ENCODE measurements at regions of chr1 and their contacts with region 1.

Region 1: GRCh38 chr1:20633190-20634064 is at the start of gene PINK1:
- DNase-seq: peak; percentile 78 to 99 (median 90)
- ATAC-seq: peak; percentile 92
- H3K4me3 ChIP-seq: peak within 1 kb of the TSS; percentile 80
- H3K4me3 Mint-ChIP-seq: peak within 1 kb of the TSS; percentile 78 to 98 (median 94)
- H3K27ac ChIP-seq: peak within 1 kb of the TSS; percentile 86
- H3K27ac Mint-ChIP-seq: peak within 1 kb of the TSS; percentile 69 to 94 (median 88)
- H3K4me1 ChIP-seq: peaks cover 8 to 9% of the 10 kb centered on the region in 2 donors
- H3K4me1 Mint-ChIP-seq: peaks cover 0 to 13% (median 8%) of the 10 kb centered on the region in 7 donors
- H3K27me3 ChIP-seq: no peaks in the 10 kb centered on the region
- H3K27me3 Mint-ChIP-seq: peaks cover 0 to 22% (median 2%) of the 10 kb centered on the region in 5 donors
- total RNA-seq, gene PINK1: 4.3 to 19.7 (median 13.1) TPM

Region 2: DNA sequence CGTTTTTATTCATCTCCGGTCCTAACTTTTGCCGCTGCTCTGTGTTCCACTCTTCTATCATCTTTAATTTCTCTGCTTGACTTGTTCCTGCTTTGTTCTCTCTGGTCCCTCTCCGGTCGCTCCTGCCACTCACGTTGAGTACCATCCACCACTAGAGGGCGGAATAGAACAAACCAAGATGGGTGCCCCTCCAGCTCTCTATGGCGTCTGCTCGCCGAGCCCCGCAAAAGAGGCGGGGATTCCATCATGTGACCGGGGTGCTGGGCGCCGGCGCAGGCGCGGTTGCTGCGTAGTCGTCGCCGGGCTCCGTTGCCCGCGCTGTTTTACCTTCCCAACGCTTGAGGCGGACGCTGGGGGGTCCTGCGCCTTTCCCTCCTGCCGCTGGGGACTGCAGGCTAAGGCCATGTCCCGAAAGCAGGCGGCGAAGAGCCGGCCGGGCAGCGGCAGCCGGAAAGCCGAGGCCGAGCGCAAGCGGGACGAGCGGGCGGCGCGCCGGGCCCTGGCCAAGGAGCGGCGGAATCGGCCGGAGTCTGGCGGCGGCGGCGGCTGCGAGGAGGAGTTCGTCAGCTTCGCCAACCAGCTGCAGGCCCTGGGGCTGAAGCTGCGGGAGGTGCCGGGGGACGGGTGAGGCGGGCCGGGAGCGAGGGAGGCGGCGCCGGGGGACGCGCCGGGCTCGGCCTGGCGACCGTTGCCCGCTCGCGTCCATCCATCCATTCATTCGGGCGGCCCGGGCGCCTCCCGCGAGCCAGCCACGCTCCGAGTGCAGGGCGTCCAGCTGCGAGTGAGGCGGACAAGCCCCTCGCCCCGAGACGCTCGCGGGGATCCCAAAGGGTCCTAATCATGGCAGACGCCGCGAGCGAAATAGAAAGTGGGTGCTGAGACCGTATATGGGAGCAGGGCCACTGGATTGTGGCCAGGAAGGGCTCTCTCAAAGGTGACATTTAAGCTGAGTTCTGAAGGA is 751.0 kb before region 1 on chr1 and contains the start of gene OTUD3:
- CTCF ChIA-PET with region 1: no interaction called
- POLR2A ChIA-PET with region 1: no interaction called
- intact Hi-C with region 1: loop called in 1 of 2 experiments (anchors 10 kb)
- DNase-seq: peak; percentile 87 to 97 (median 96)
- ATAC-seq: peak; percentile 100
- H3K4me3 ChIP-seq: peak within 1 kb of the TSS; percentile 66
- H3K4me3 Mint-ChIP-seq: peak within 1 kb of the TSS; percentile 77 to 95 (median 88)
- H3K27ac ChIP-seq: peak within 1 kb of the TSS; percentile 82
- H3K27ac Mint-ChIP-seq: peak within 1 kb of the TSS; percentile 3 to 88 (median 75)
- H3K4me1 ChIP-seq: peaks cover 15 to 23% of the 10 kb centered on the region in 2 donors
- H3K4me1 Mint-ChIP-seq: peaks cover 20 to 50% (median 47%) of the 10 kb centered on the region in 7 donors
- H3K27me3 ChIP-seq: no peaks in the 10 kb centered on the region
- H3K27me3 Mint-ChIP-seq: peaks cover 0 to 15% (median 6%) of the 10 kb centered on the region in 5 donors
- total RNA-seq, gene OTUD3: 13.1 to 23.6 (median 20.8) TPM

Region 3: DNA sequence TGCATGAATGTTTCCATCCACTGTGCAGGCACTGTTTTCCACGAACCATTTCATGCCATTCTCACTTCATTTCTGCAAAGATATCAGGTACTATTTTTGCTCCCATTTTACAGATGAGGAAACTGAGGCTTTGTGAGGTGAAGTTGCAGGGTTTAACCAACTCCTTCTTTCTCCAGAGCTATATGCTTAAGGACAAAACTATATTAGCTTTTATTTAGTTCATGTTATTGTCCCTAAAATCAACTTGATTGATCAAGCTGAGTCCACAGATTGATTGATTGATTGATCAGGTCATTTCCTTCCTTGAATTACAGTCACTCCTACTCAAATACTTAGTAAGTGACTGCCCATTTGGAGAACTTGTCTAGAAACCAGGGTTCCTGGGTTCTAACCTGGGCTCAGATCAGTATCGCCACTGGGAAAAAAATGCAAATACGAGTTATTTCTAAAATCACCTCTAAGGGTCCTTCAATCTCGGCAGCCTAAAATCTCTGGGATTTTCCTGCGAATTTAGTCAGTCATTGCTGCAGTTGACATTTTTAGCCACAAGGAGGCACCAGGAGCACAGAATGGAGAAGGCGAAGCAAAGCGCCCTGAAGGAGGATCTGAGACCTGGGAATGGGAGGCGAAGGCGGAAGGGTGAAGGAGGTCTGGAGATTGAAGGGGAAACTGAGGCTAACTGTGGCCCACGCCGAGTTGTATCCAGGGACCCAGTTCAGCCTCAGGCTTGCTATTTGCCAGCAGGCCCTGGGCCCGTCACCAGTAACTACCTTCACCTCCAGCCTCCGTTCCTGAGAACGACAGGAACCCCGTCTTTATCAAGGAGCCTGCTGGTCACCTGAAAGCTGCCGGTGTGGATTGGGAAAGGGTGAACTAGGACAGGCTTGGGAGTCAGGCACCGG is 111.2 kb before region 1 on chr1:
- CTCF ChIA-PET with region 1: interaction called, 4 read pairs
- POLR2A ChIA-PET with region 1: interaction called, 4 read pairs
- intact Hi-C with region 1: loop called in 1 of 2 experiments (anchors 1 kb)
- DNase-seq: peak; percentile 28 to 64 (median 55)
- ATAC-seq: peak; percentile 67
- H3K4me3 ChIP-seq: no peak overlapping the region
- H3K4me3 Mint-ChIP-seq: no peak overlapping the region
- H3K27ac ChIP-seq: no peak overlapping the region
- H3K27ac Mint-ChIP-seq: peak overlapping the region in 1 of 9 donors; percentile 44
- H3K4me1 ChIP-seq: no peaks in the 10 kb centered on the region
- H3K4me1 Mint-ChIP-seq: peaks cover 0 to 4% (median 0%) of the 10 kb centered on the region in 7 donors
- H3K27me3 ChIP-seq: peaks cover 0 to 3% of the 10 kb centered on the region in 2 donors
- H3K27me3 Mint-ChIP-seq: peaks cover 7 to 25% (median 22%) of the 10 kb centered on the region in 5 donors

Region 4: DNA sequence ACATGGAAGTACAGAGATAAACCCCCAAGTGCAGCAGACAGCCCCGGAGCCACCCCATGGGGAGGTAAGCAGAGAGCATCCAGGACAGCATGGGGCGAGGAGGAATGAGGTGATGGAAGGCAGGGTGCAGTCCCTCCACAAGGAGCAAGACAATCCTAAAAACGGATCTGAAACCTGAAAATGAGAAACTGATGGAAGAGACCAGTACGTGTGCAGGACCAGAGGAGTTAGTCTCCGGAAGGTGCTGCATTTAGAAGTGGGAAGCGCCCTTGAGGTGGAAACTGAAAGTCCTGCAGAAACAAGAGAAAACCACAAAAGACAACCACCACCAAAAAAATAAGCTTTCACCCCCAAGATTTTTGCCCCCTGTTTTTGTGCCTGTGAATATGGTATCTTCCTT is 45.2 kb after region 1 on chr1:
- CTCF ChIA-PET with region 1: no interaction called
- POLR2A ChIA-PET with region 1: no interaction called
- intact Hi-C with region 1: no loop called
- DNase-seq: no peak
- ATAC-seq: peak; percentile 34
- H3K4me3 ChIP-seq: no peak overlapping the region
- H3K4me3 Mint-ChIP-seq: peak overlapping the region in 4 of 10 donors; percentile 10 to 63 (median 32)
- H3K27ac ChIP-seq: no peak overlapping the region
- H3K27ac Mint-ChIP-seq: peak overlapping the region in 1 of 9 donors; percentile 2
- H3K4me1 ChIP-seq: no peaks in the 10 kb centered on the region
- H3K4me1 Mint-ChIP-seq: peaks cover 4 to 12% (median 7%) of the 10 kb centered on the region in 7 donors
- H3K27me3 ChIP-seq: no peaks in the 10 kb centered on the region
- H3K27me3 Mint-ChIP-seq: peaks cover 0 to 72% (median 8%) of the 10 kb centered on the region in 5 donors

Region 5: GRCh38 chr1:20696397-20697329 is 63.2 kb after region 1 on chr1:
- CTCF ChIA-PET with region 1: interaction called, 3 read pairs
- POLR2A ChIA-PET with region 1: interaction called, 3 read pairs
- intact Hi-C with region 1: loop called in 1 of 2 experiments (anchors 1 kb)
- DNase-seq: peak; percentile 38 to 73 (median 65)
- ATAC-seq: peak; percentile 96
- H3K4me3 ChIP-seq: peak overlapping the region; percentile 89
- H3K4me3 Mint-ChIP-seq: peak overlapping the region; percentile 81 to 91 (median 89)
- H3K27ac ChIP-seq: peak overlapping the region; percentile 40
- H3K27ac Mint-ChIP-seq: peak overlapping the region in 4 of 9 donors; percentile 38 to 77 (median 70)
- H3K4me1 ChIP-seq: peaks cover 0 to 5% of the 10 kb centered on the region in 2 donors
- H3K4me1 Mint-ChIP-seq: peaks cover 3 to 8% (median 4%) of the 10 kb centered on the region in 7 donors
- H3K27me3 ChIP-seq: no peaks in the 10 kb centered on the region
- H3K27me3 Mint-ChIP-seq: peaks cover 0 to 7% (median 0%) of the 10 kb centered on the region in 5 donors

Region 6: GRCh38 chr1:20847611-20848080 is 214.2 kb after region 1 on chr1:
- CTCF ChIA-PET with region 1: no interaction called
- POLR2A ChIA-PET with region 1: no interaction called
- intact Hi-C with region 1: no loop called
- DNase-seq: no peak
- ATAC-seq: no peak
- H3K4me3 ChIP-seq: no peak overlapping the region
- H3K4me3 Mint-ChIP-seq: no peak overlapping the region
- H3K27ac ChIP-seq: no peak overlapping the region
- H3K27ac Mint-ChIP-seq: no peak overlapping the region
- H3K4me1 ChIP-seq: no peaks in the 10 kb centered on the region
- H3K4me1 Mint-ChIP-seq: no peaks in the 10 kb centered on the region
- H3K27me3 ChIP-seq: no peaks in the 10 kb centered on the region
- H3K27me3 Mint-ChIP-seq: no peaks in the 10 kb centered on the region

Region 7: GRCh38 chr1:21149862-21150432 is 516.5 kb after region 1 on chr1:
- CTCF ChIA-PET with region 1: no interaction called
- POLR2A ChIA-PET with region 1: no interaction called
- intact Hi-C with region 1: no loop called
- DNase-seq: no peak
- ATAC-seq: no peak
- H3K4me3 ChIP-seq: no peak overlapping the region
- H3K4me3 Mint-ChIP-seq: no peak overlapping the region
- H3K27ac ChIP-seq: no peak overlapping the region
- H3K27ac Mint-ChIP-seq: no peak overlapping the region
- H3K4me1 ChIP-seq: no peaks in the 10 kb centered on the region
- H3K4me1 Mint-ChIP-seq: peaks cover 0 to 13% (median 0%) of the 10 kb centered on the region in 7 donors
- H3K27me3 ChIP-seq: no peaks in the 10 kb centered on the region
- H3K27me3 Mint-ChIP-seq: no peaks in the 10 kb centered on the region

Region 8: GRCh38 chr1:21439721-21440629 is 806.5 kb after region 1 on chr1 and contains the start of gene NBPF3:
- CTCF ChIA-PET with region 1: no interaction called
- POLR2A ChIA-PET with region 1: no interaction called
- intact Hi-C with region 1: loop called in 1 of 2 experiments (anchors 5 kb)
- DNase-seq: peak; percentile 71 to 86 (median 83)
- ATAC-seq: peak; percentile 99
- H3K4me3 ChIP-seq: peak within 1 kb of the TSS; percentile 80
- H3K4me3 Mint-ChIP-seq: peak within 1 kb of the TSS; percentile 89 to 98 (median 94)
- H3K27ac ChIP-seq: peak within 1 kb of the TSS; percentile 74
- H3K27ac Mint-ChIP-seq: peak within 1 kb of the TSS; percentile 73 to 96 (median 92)
- H3K4me1 ChIP-seq: no peaks in the 10 kb centered on the region
- H3K4me1 Mint-ChIP-seq: peaks cover 20 to 35% (median 24%) of the 10 kb centered on the region in 7 donors
- H3K27me3 ChIP-seq: no peaks in the 10 kb centered on the region
- H3K27me3 Mint-ChIP-seq: peaks cover 0 to 42% (median 2%) of the 10 kb centered on the region in 5 donors
- total RNA-seq, gene NBPF3: 5.6 to 18.1 (median 12.0) TPM

Measured in naive thymus-derived CD4-positive, alpha-beta T cell (primary cell).